ENCODE measurements at regions of chr19 and their contacts with region 1.

Region 1: DNA sequence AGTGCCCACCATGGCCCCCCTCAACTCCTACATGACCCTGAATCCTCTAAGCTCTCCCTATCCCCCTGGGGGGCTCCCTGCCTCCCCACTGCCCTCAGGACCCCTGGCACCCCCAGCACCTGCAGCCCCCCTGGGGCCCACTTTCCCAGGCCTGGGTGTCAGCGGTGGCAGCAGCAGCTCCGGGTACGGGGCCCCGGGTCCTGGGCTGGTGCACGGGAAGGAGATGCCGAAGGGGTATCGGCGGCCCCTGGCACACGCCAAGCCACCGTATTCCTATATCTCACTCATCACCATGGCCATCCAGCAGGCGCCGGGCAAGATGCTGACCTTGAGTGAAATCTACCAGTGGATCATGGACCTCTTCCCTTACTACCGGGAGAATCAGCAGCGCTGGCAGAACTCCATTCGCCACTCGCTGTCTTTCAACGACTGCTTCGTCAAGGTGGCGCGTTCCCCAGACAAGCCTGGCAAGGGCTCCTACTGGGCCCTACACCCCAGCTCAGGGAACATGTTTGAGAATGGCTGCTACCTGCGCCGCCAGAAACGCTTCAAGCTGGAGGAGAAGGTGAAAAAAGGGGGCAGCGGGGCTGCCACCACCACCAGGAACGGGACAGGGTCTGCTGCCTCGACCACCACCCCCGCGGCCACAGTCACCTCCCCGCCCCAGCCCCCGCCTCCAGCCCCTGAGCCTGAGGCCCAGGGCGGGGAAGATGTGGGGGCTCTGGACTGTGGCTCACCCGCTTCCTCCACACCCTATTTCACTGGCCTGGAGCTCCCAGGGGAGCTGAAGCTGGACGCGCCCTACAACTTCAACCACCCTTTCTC is 8.2 kb downstream of the FOXA3 start:
- DNase-seq: no peak
- H3K4me3 ChIP-seq: no peak overlapping the region
- H3K27ac ChIP-seq: no peak overlapping the region
- H3K4me1 ChIP-seq: no peaks in the 10 kb centered on the region
- H3K27me3 ChIP-seq: no peaks in the 10 kb centered on the region
- CTCF ChIP-seq: no peak
- EP300 ChIP-seq: no peak
- POLR2A ChIP-seq: no peak

Region 2: GRCh38 chr19:44430956-44431355 is 1441.4 kb before region 1 on chr19:
- intact Hi-C with region 1: no loop called
- DNase-seq: no peak
- H3K4me3 ChIP-seq: no peak overlapping the region
- H3K27ac ChIP-seq: no peak overlapping the region
- H3K4me1 ChIP-seq: no peaks in the 10 kb centered on the region
- H3K27me3 ChIP-seq: no peaks in the 10 kb centered on the region
- CTCF ChIP-seq: no peak
- EP300 ChIP-seq: no peak
- POLR2A ChIP-seq: no peak

Region 3: GRCh38 chr19:45717166-45717982 is 154.9 kb before region 1 on chr19:
- intact Hi-C with region 1: loop called in 1 of 4 experiments (anchors 5 kb)
- DNase-seq: peak; percentile 99
- H3K4me3 ChIP-seq: peak overlapping the region; percentile 52
- H3K27ac ChIP-seq: peak overlapping the region; percentile 66 to 74
- H3K4me1 ChIP-seq: peaks cover 5% of the 10 kb centered on the region
- H3K27me3 ChIP-seq: no peaks in the 10 kb centered on the region
- CTCF ChIP-seq: peak in 2 of 3 donors; percentile 28 to 50
- EP300 ChIP-seq: peak; percentile 82
- POLR2A ChIP-seq: peak; percentile 61

Region 4: GRCh38 chr19:45834970-45835369 is 37.3 kb before region 1 on chr19:
- intact Hi-C with region 1: no loop called
- DNase-seq: no peak
- H3K4me3 ChIP-seq: no peak overlapping the region
- H3K27ac ChIP-seq: no peak overlapping the region
- H3K4me1 ChIP-seq: no peaks in the 10 kb centered on the region
- H3K27me3 ChIP-seq: no peaks in the 10 kb centered on the region
- CTCF ChIP-seq: no peak
- EP300 ChIP-seq: no peak
- POLR2A ChIP-seq: no peak

Region 5: GRCh38 chr19:45939792-45940514 is 67.6 kb after region 1 on chr19:
- intact Hi-C with region 1: no loop called
- DNase-seq: no peak
- H3K4me3 ChIP-seq: no peak overlapping the region
- H3K27ac ChIP-seq: no peak overlapping the region
- H3K4me1 ChIP-seq: no peaks in the 10 kb centered on the region
- H3K27me3 ChIP-seq: no peaks in the 10 kb centered on the region
- CTCF ChIP-seq: no peak
- EP300 ChIP-seq: no peak
- POLR2A ChIP-seq: no peak

Measured in ovary (tissue), 10 donors.